Activated CD4-positive, alpha-beta memory T cell treated with anti-CD3 and anti-CD28 coated beads for 36 hours (primary cell): ENCODE measurements at regions of chr14 and their contacts with region 1.

Region 1: DNA sequence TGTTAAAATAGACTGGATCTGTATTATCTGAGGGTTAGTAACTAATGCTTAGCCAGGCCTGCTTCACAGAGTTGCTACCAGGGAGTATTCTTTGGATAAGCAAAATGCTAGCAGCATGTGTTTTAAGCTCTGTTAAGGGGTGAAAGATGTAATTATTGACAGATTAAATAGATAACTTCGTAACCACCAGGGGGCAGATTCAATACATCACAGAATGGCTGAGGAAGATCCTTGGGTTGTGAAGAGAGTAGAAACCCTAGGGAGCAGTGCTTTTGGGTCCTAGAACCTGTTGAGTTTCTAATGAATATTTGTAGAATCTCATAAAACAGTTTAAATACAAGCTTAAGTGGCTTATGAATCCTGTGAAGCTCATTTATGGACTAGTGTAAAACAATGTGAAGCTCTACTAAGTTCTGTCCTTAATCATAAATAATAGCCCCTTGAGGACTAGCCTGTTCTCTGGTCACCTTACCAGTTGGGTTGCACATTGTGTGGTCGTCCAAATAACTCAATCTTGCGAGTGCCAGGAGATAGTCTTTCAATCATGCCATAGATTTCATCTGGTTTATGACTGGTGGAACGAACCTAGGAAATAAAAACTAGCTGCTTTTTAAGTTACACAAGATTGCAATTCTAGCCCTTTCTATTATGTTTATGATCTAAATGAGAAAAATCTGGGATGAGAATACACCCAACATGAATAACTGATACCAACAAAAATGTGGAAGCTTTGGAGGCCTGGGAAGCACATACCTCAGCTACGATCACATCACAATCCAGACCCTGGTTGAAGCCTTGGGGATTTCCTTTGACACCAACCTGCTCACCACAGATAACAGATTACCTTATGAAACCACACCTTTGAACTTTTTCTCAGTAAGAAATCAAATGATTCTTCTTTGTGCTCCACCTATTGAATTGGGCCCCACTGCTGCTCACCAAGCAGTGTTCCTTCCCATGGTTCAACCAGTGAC is 12.3 kb downstream of the METTL3 start:
- DNase-seq: no peak
- H3K4me3 Mint-ChIP-seq: no peak overlapping the region
- H3K27ac Mint-ChIP-seq: peak overlapping the region; percentile 59
- H3K4me1 Mint-ChIP-seq: peaks cover 24% of the 10 kb centered on the region
- H3K27me3 Mint-ChIP-seq: no peaks in the 10 kb centered on the region

Region 2: DNA sequence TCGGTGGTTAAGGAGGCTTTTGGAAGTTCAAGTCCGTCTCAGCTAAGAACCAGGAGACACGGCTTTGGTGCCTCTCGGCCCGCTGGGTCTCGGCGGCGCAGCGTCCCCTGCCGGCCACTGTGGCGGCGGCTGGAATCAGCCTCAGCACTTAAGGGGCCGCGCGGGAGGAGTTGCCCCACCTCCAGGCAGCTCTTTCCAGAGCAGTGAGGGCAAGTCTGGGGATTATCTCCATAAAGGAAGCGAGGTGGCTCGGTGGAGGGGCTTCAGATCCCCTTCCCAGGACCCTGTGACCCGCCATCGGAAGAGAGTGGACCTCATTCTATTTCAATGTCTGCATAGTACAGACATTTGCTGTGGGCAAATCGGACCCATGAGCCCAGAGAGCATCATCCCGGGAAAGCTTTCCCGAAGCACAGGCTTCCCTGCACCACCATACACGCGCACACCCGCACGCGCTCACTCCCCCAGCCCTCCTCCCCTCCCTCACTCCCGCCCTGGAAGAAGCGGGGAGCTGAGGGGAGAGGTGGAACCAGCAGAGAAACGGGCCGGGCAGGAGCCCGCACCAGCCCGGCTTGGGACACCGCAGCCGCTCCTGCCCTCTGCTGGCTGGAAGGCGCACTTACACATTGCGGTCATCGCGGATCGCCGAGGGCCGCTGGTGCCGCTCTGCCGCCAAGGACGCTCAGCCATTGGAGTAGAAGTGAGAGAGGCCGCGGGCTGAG is 527.7 kb before region 1 on chr14:
- CTCF ChIA-PET with region 1: no interaction called
- POLR2A ChIA-PET with region 1: no interaction called
- intact Hi-C with region 1: no loop called
- DNase-seq: peak; percentile 86
- H3K4me3 Mint-ChIP-seq: peak overlapping the region; percentile 84
- H3K27ac Mint-ChIP-seq: no peak overlapping the region
- H3K4me1 Mint-ChIP-seq: peaks cover 11% of the 10 kb centered on the region
- H3K27me3 Mint-ChIP-seq: peaks cover 25% of the 10 kb centered on the region

Region 3: GRCh38 chr14:21326972-21327371 is 171.9 kb before region 1 on chr14:
- CTCF ChIA-PET with region 1: no interaction called
- POLR2A ChIA-PET with region 1: no interaction called
- intact Hi-C with region 1: no loop called
- DNase-seq: no peak
- H3K4me3 Mint-ChIP-seq: no peak overlapping the region
- H3K27ac Mint-ChIP-seq: no peak overlapping the region
- H3K4me1 Mint-ChIP-seq: no peaks in the 10 kb centered on the region
- H3K27me3 Mint-ChIP-seq: peaks cover 5% of the 10 kb centered on the region

Region 4: GRCh38 chr14:21525962-21526671 is 27.3 kb after region 1 on chr14 and contains the start of gene SALL2:
- CTCF ChIA-PET with region 1: interaction called, 19 read pairs
- POLR2A ChIA-PET with region 1: interaction called, 3 read pairs
- intact Hi-C with region 1: no loop called
- DNase-seq: peak; percentile 86
- H3K4me3 Mint-ChIP-seq: peak within 1 kb of the TSS; percentile 77
- H3K27ac Mint-ChIP-seq: no peak within 1 kb of the TSS
- H3K4me1 Mint-ChIP-seq: peaks cover 10% of the 10 kb centered on the region
- H3K27me3 Mint-ChIP-seq: no peaks in the 10 kb centered on the region
- total RNA-seq, gene SALL2: 4.4 to 4.8 TPM

Region 5: DNA sequence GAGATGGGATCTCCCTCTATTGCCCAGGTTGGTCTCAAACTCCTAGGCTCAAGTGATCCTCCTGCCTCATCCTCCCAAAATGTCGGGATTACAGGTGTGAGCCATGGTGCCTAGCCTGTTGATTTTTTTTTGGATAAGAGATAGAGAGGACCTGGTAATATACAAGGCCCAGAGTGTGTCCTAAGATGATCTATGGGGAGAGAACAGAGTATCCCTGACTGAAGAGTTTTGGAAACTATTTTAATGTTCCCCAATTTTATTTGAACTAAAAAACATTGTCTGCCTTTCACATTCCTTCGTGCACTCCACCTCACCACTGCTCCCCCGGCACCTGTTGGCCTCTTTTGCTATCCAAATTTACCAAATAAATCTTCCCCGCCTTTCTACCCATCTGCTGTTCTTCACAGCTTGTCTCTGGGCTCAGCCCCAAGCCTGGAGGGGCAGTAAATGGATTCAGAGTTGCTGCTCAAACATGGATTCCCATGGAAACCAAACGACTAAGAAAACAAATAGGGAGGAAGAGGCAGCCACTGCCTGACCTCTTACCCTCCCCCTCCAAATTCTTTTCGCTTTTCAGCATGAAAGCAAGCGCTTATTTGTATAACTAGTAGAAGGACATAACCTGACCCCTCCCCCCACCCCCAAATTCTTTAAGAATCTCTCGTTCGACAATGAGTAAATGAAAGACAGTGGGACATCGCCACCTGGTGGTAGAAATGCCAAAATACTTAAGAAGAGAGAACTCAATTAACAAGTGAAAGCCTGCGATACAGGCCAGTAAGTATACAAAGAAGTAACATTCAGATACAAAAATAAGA is 58.5 kb after region 1 on chr14:
- CTCF ChIA-PET with region 1: interaction called, 96 read pairs
- POLR2A ChIA-PET with region 1: interaction called, 5 read pairs
- intact Hi-C with region 1: loop called (anchors 1 kb)
- DNase-seq: peak; percentile 76
- H3K4me3 Mint-ChIP-seq: no peak overlapping the region
- H3K27ac Mint-ChIP-seq: peak overlapping the region; percentile 16
- H3K4me1 Mint-ChIP-seq: peaks cover 5% of the 10 kb centered on the region
- H3K27me3 Mint-ChIP-seq: no peaks in the 10 kb centered on the region